PC-9 (cell line): ENCODE measurements at regions of chr11 and their contacts with region 1.

Region 1: GRCh38 chr11:63472388-63472787 is 18.6 kb downstream of the PLAAT5 start:
- DNase-seq: no peak
- H3K4me3 ChIP-seq: no peak overlapping the region
- H3K27ac ChIP-seq: no peak overlapping the region
- H3K4me1 ChIP-seq: no peaks in the 10 kb centered on the region
- H3K27me3 ChIP-seq: peaks cover 7% of the 10 kb centered on the region
- CTCF ChIP-seq: no peak

Region 2: GRCh38 chr11:63459586-63459985 is 12.8 kb before region 1 on chr11:
- CTCF ChIA-PET with region 1: no interaction called
- POLR2A ChIA-PET with region 1: interaction called, 24 read pairs
- intact Hi-C with region 1: no loop called
- DNase-seq: peak; percentile 15 to 45
- H3K4me3 ChIP-seq: no peak overlapping the region
- H3K27ac ChIP-seq: no peak overlapping the region
- H3K4me1 ChIP-seq: no peaks in the 10 kb centered on the region
- H3K27me3 ChIP-seq: peaks cover 42% of the 10 kb centered on the region
- CTCF ChIP-seq: no peak